ENCODE measurements at regions of chr19 and their contacts with region 1.

Region 1: DNA sequence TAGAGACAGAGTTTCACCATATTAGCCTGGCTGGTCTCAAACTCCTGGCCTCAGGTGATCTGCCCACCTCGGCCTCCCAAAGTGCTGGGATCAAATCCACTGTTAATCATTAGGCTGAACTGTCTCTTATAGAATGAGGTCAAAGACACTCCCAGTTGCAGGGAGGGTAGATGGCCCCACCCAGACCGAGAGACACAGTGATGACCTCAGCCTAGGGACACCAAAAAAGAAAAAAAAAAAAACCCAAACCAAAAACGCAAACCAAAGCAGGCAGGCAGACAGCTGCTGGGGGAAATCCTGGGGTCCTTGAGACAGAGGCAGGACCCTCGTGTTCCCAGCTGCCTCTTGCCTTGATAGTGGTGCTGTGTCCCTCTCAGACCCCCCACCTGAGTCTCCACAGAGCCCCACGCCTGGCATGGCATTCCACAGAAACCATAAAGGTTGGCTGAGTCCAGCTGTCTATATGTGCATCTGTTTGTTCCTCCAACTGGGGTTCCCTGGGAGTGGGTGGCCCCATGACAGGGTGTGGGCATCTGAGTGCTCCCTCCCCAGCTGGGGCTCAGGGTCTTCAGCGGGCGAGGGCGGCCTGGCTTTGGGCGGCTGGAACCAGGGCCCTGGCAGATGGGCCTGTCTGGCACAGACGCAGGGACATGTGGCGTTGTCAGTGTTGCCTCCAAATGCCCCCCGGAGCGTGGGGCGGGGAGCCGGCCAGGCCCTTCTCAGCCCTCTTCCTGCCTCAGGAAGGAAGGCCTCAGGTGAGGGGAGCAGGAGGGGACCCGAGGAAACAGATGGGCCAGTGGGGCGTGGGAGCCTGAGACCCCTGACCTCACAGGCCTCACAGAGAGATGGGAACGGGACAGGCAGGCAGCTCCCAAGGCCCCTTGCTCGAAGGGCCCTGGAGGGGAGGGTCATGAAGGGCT is 5.2 kb downstream of the DAND5 start:
- DNase-seq: no peak
- H3K4me3 Mint-ChIP-seq: no peak overlapping the region
- H3K27ac Mint-ChIP-seq: no peak overlapping the region
- H3K4me1 Mint-ChIP-seq: peaks cover 8% of the 10 kb centered on the region
- H3K27me3 Mint-ChIP-seq: peaks cover 10% of the 10 kb centered on the region

Region 2: GRCh38 chr19:12716861-12717260 is 257.7 kb before region 1 on chr19:
- CTCF ChIA-PET with region 1: no interaction called
- intact Hi-C with region 1: no loop called
- DNase-seq: peak; percentile 55
- H3K4me3 Mint-ChIP-seq: no peak overlapping the region
- H3K27ac Mint-ChIP-seq: peak overlapping the region; percentile 47
- H3K4me1 Mint-ChIP-seq: peaks cover 26% of the 10 kb centered on the region
- H3K27me3 Mint-ChIP-seq: no peaks in the 10 kb centered on the region

Region 3: GRCh38 chr19:13007292-13008045 is 32.9 kb after region 1 on chr19:
- CTCF ChIA-PET with region 1: interaction called, 16 read pairs
- intact Hi-C with region 1: no loop called
- DNase-seq: no peak
- H3K4me3 Mint-ChIP-seq: no peak overlapping the region
- H3K27ac Mint-ChIP-seq: no peak overlapping the region
- H3K4me1 Mint-ChIP-seq: peaks cover 9% of the 10 kb centered on the region
- H3K27me3 Mint-ChIP-seq: peaks cover 22% of the 10 kb centered on the region

Region 4: GRCh38 chr19:13093407-13094105 is 119.0 kb after region 1 on chr19:
- CTCF ChIA-PET with region 1: interaction called, 92 read pairs
- intact Hi-C with region 1: loop called (anchors 1 kb)
- DNase-seq: peak; percentile 90
- H3K4me3 Mint-ChIP-seq: no peak overlapping the region
- H3K27ac Mint-ChIP-seq: no peak overlapping the region
- H3K4me1 Mint-ChIP-seq: peaks cover 21% of the 10 kb centered on the region
- H3K27me3 Mint-ChIP-seq: peaks cover 29% of the 10 kb centered on the region

Region 5: DNA sequence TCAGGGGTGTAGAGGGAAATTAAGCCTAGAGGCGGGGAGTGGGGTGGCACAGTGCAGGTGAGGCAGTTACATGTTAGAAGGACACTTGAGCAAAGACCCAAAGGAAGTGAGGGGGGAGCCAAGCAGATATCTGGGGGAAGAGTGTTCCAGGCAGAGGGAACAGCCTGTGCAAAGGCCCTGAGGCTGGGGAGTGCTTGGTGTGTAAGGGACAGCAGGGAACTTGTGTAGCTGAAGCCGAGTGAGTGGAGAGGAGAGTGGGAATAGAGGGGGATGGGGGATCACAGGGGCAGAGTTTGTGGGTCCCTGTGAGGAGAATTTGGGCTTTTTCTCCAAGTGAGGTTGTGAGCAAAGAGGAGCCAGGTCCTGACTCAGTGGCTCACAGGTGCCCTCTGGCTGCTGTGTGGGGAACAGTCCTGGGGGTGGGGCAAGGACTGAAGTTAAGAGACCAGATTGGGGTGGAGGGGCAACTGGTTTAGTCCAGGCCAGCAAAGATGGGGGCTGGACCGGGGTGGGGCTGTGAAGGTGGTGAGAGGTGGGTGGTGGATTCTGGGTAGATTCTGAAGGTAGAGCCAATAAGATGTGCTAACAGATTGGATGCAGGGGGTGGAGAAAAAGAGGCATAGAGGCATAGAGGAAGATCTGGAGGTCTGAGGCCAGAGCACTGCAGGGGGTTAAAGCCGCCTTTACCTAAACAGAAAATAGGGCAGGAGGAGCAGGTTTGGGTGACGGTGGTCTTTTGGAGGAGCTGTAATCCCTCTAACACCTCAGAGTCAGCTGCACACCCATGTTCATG is 456.4 kb after region 1 on chr19:
- CTCF ChIA-PET with region 1: no interaction called
- intact Hi-C with region 1: loop called (anchors 5 kb)
- DNase-seq: peak; percentile 77
- H3K4me3 Mint-ChIP-seq: no peak overlapping the region
- H3K27ac Mint-ChIP-seq: no peak overlapping the region
- H3K4me1 Mint-ChIP-seq: no peaks in the 10 kb centered on the region
- H3K27me3 Mint-ChIP-seq: peaks cover 21% of the 10 kb centered on the region